Stomach (tissue), 19 donors: ENCODE measurements at regions of chr13 and their contacts with region 1.

Region 1: DNA sequence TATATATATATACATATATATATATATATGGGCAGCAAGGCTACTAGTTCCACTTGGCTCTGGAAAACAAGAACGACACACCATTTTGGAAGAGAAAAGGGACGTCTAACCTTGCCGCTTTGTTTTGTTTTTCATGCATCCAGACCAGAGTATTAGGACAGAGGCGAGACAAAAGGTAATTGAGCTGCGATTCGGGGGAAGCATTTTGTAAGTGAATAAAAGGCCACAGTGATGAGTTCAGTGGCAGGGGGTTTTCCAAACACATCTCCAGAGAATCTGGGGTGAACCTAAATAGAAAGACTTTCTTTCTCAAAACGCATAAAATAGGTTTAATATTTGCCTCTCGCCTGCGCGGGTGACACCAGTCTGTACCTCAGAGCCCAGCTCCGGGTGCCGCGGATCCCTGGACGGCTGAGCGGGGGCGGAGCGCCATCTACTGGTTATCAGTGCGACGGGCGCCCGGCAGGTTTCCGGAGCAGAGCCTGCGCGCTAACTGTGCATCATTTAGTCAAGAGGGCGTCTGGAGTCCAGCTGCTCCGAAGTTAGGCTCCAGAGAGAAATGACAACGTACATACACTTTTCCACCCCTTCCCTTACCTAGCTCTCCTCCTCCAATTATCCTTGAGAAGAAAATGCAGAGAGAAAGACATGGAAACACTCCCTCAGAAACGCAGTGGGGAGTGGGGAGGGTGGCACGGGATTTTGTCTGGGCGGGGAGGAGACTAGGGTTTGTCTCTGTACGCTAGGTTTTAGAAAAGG is 262.3 kb downstream of the TBC1D4 start:
- DNase-seq: peak; percentile 82 to 92
- H3K4me3 ChIP-seq: peak overlapping the region in 1 of 4 donors; percentile 16
- H3K27ac ChIP-seq: no peak overlapping the region
- H3K4me1 ChIP-seq: peaks cover 0 to 10% (median 8%) of the 10 kb centered on the region in 4 donors
- H3K27me3 ChIP-seq: peaks cover 0 to 11% (median 5%) of the 10 kb centered on the region in 3 donors
- CTCF ChIP-seq: peak in 6 of 7 experiments; percentile 4 to 84 (median 78)
- EP300 ChIP-seq: no peak
- POLR2A ChIP-seq: no peak

Region 2: GRCh38 chr13:73754727-73755292 is 1464.8 kb before region 1 on chr13:
- intact Hi-C with region 1: loop called (anchors 10 kb)
- DNase-seq: peak in 1 of 2 donors; percentile 87
- H3K4me3 ChIP-seq: no peak overlapping the region
- H3K27ac ChIP-seq: no peak overlapping the region
- H3K4me1 ChIP-seq: peaks cover 0 to 15% (median 4%) of the 10 kb centered on the region in 4 donors
- H3K27me3 ChIP-seq: no peaks in the 10 kb centered on the region
- CTCF ChIP-seq: peak in 5 of 7 experiments; percentile 39 to 64 (median 61)
- EP300 ChIP-seq: no peak
- POLR2A ChIP-seq: no peak

Region 3: DNA sequence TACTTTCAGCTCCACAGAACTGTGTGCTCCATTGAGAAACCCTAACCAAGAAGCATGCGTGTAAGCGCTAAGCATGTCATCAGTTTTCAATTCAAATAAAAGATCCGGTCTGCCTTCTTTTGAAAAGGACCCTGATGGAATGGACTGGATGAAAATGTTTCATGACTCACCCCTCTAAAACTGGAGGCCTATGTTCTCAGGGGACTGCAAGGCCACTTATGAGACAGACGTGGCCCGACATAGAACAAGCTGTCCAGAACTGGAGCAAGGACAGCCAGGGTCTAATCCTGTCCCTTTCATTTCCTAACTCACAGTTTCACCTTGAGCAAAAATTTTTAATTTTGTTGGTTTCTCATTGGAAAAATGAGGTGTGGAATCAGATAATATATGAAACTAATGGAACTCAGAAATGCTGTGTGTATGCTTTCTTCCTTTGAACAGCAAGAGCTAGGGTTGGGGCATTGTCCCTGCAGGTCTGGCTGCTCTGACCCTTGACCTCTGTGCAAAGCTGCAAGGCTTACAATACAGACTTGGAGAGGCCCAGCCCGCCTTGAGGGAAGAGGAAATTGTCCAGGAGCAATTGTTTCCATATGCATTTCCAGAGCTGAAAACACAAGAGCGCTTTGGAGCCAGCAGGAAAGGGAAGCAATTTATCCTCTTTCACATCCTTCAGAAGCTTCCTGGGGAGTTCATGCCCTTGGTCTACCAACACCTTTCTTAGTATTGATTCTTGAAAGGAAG is 532.0 kb before region 1 on chr13:
- intact Hi-C with region 1: no loop called
- DNase-seq: peak in 1 of 2 donors; percentile 35
- H3K4me3 ChIP-seq: no peak overlapping the region
- H3K27ac ChIP-seq: no peak overlapping the region
- H3K4me1 ChIP-seq: no peaks in the 10 kb centered on the region
- H3K27me3 ChIP-seq: no peaks in the 10 kb centered on the region
- CTCF ChIP-seq: no peak
- EP300 ChIP-seq: no peak
- POLR2A ChIP-seq: no peak

Region 4: DNA sequence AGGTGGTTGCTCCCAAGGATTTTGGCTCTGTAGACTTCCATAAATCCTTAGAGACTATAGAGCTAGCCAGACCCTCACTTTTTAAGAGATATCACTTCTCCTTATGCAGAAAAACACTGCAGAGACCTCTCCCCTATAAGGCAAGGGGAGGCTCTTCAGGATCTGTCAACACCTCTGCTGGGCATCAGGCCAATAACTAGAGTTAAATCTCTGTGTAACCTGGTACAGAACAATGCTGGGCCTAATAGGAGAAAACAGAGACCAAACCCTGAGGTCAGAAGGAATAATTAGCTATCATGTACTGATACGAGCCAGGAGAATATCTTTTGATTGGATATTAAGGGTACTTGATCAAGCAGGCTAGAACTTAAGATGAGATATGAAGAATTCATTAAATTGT is 96.2 kb before region 1 on chr13:
- intact Hi-C with region 1: no loop called
- DNase-seq: no peak
- H3K4me3 ChIP-seq: no peak overlapping the region
- H3K27ac ChIP-seq: no peak overlapping the region
- H3K4me1 ChIP-seq: no peaks in the 10 kb centered on the region
- H3K27me3 ChIP-seq: no peaks in the 10 kb centered on the region
- CTCF ChIP-seq: no peak
- EP300 ChIP-seq: no peak
- POLR2A ChIP-seq: no peak